ENCODE measurements at regions of chrX and their contacts with region 1.

Region 1: DNA sequence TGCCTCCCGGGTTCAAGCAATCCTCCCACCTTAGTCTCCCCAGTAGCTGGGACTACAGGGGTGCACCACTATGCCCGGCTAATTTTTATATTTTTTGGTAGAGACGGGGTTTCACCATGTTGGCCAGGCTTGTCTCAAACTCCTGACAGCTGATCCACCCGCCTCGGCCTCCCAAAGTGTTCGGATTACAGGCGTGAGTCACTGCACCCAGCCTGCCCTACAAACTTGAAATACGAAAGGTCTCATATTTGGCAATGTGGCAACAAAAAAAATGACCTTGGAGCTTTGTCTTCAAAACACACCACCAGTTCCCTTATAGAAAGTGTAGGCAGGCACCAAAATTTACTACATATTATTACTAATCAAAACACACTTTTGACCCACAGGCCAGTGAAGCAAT is 22.9 kb upstream of the PTCHD1 start:
- DNase-seq: no peak
- ATAC-seq: no peak
- H3K4me3 ChIP-seq: no peak overlapping the region
- H3K27ac ChIP-seq: no peak overlapping the region
- H3K4me1 ChIP-seq: no peaks in the 10 kb centered on the region
- H3K27me3 ChIP-seq: no peaks in the 10 kb centered on the region
- CTCF ChIP-seq: no peak
- EP300 ChIP-seq: no peak
- POLR2A ChIP-seq: no peak
- RAD21 ChIP-seq: no peak

Region 2: DNA sequence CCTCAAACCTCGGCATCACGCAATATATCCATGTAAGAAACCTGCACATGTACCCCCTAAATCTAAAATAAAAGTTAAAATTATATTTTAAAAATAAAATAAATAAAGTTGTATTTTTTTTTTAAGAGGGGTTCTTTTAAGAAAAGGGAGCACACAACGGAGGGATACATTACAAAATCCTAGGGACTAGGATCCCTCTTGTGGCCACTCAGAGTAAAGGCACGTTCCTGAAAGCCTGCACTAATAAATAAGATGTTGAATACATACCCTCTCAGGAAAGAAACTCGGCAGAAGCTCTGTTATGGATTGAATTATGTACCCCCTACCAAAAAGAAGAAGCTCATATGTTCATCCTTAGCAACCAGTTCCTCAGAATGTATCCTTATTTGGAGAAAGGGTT is 304.6 kb after region 1 on chrX:
- CTCF ChIA-PET with region 1: no interaction called
- POLR2A ChIA-PET with region 1: no interaction called
- in situ Hi-C with region 1: no loop called
- intact Hi-C with region 1: loop called (anchors 5 kb)
- DNase-seq: peak; percentile 0
- ATAC-seq: no peak
- H3K4me3 ChIP-seq: no peak overlapping the region
- H3K27ac ChIP-seq: no peak overlapping the region
- H3K4me1 ChIP-seq: no peaks in the 10 kb centered on the region
- H3K27me3 ChIP-seq: no peaks in the 10 kb centered on the region
- CTCF ChIP-seq: peak; percentile 29; the same call in 1 of the 2 replicates
- EP300 ChIP-seq: no peak
- POLR2A ChIP-seq: no peak
- RAD21 ChIP-seq: no peak